Activated CD4-positive, alpha-beta T cell treated with anti-CD3 and anti-CD28 coated beads for 36 hours (primary cell): ENCODE measurements at regions of chr20 and their contacts with region 1.

Region 1: GRCh38 chr20:36460648-36461599 is 80.4 kb upstream of the MYL9 start:
- DNase-seq: peak; percentile 95
- ATAC-seq: peak; percentile 78
- H3K4me3 Mint-ChIP-seq: peak overlapping the region; percentile 67
- H3K27ac Mint-ChIP-seq: peak overlapping the region; percentile 83
- H3K4me1 Mint-ChIP-seq: peaks cover 47% of the 10 kb centered on the region
- H3K27me3 Mint-ChIP-seq: no peaks in the 10 kb centered on the region

Region 2: GRCh38 chr20:35741892-35742740 is 718.8 kb before region 1 on chr20 and contains the start of gene RBM39:
- CTCF ChIA-PET with region 1: interaction called, 8 read pairs
- POLR2A ChIA-PET with region 1: no interaction called
- intact Hi-C with region 1: loop called in 1 of 2 experiments (anchors 1 kb)
- DNase-seq: peak; percentile 100
- ATAC-seq: peak; percentile 88
- H3K4me3 Mint-ChIP-seq: peak within 1 kb of the TSS; percentile 90
- H3K27ac Mint-ChIP-seq: peak within 1 kb of the TSS; percentile 100
- H3K4me1 Mint-ChIP-seq: peaks cover 45% of the 10 kb centered on the region
- H3K27me3 Mint-ChIP-seq: no peaks in the 10 kb centered on the region
- total RNA-seq, gene RBM39: 303 to 356 TPM

Region 3: GRCh38 chr20:36491901-36492617 is 31.1 kb after region 1 on chr20:
- CTCF ChIA-PET with region 1: interaction called, 6 read pairs
- POLR2A ChIA-PET with region 1: interaction called, 3 read pairs
- intact Hi-C with region 1: loop called in 1 of 2 experiments (anchors 1 kb)
- DNase-seq: peak; percentile 76
- ATAC-seq: peak; percentile 91
- H3K4me3 Mint-ChIP-seq: peak overlapping the region; percentile 31
- H3K27ac Mint-ChIP-seq: peak overlapping the region; percentile 80
- H3K4me1 Mint-ChIP-seq: peaks cover 29% of the 10 kb centered on the region
- H3K27me3 Mint-ChIP-seq: no peaks in the 10 kb centered on the region

Region 4: GRCh38 chr20:36591854-36592641 is 131.1 kb after region 1 on chr20:
- CTCF ChIA-PET with region 1: no interaction called
- POLR2A ChIA-PET with region 1: interaction called, 6 read pairs
- intact Hi-C with region 1: loop called in 1 of 2 experiments (anchors 1 kb)
- DNase-seq: peak; percentile 76
- ATAC-seq: peak; percentile 50
- H3K4me3 Mint-ChIP-seq: peak overlapping the region; percentile 4
- H3K27ac Mint-ChIP-seq: peak overlapping the region; percentile 69
- H3K4me1 Mint-ChIP-seq: peaks cover 57% of the 10 kb centered on the region
- H3K27me3 Mint-ChIP-seq: no peaks in the 10 kb centered on the region

Region 5: GRCh38 chr20:36745927-36746659 is 285.2 kb after region 1 on chr20 and contains the start of gene NDRG3:
- CTCF ChIA-PET with region 1: interaction called, 3 read pairs
- POLR2A ChIA-PET with region 1: no interaction called
- intact Hi-C with region 1: loop called in 1 of 2 experiments (anchors 2 kb)
- DNase-seq: peak; percentile 96
- ATAC-seq: peak; percentile 99
- H3K4me3 Mint-ChIP-seq: peak within 1 kb of the TSS; percentile 81
- H3K27ac Mint-ChIP-seq: peak within 1 kb of the TSS; percentile 87
- H3K4me1 Mint-ChIP-seq: peaks cover 20% of the 10 kb centered on the region
- H3K27me3 Mint-ChIP-seq: no peaks in the 10 kb centered on the region
- total RNA-seq, gene NDRG3: 24.8 to 27.5 TPM

Region 6: GRCh38 chr20:37095599-37096414 is 634.9 kb after region 1 on chr20 and contains the start of gene RBL1:
- CTCF ChIA-PET with region 1: no interaction called
- POLR2A ChIA-PET with region 1: no interaction called
- intact Hi-C with region 1: loop called in 1 of 2 experiments (anchors 2 kb)
- DNase-seq: peak; percentile 94
- ATAC-seq: peak; percentile 83
- H3K4me3 Mint-ChIP-seq: peak within 1 kb of the TSS; percentile 95
- H3K27ac Mint-ChIP-seq: peak within 1 kb of the TSS; percentile 100
- H3K4me1 Mint-ChIP-seq: peaks cover 26% of the 10 kb centered on the region
- H3K27me3 Mint-ChIP-seq: no peaks in the 10 kb centered on the region
- total RNA-seq, gene RBL1: 39.5 to 43.2 TPM